PC-9 (cell line): ENCODE measurements at regions of chr1 and their contacts with region 1.

Region 1: GRCh38 chr1:51760872-51761271 is 117.7 kb downstream of the NRDC start:
- DNase-seq: peak in 1 of 2 experiments; percentile 76
- H3K4me3 ChIP-seq: no peak overlapping the region
- H3K27ac ChIP-seq: peak overlapping the region; percentile 60
- H3K4me1 ChIP-seq: peaks cover 30% of the 10 kb centered on the region
- H3K27me3 ChIP-seq: no peaks in the 10 kb centered on the region
- CTCF ChIP-seq: no peak

Region 2: DNA sequence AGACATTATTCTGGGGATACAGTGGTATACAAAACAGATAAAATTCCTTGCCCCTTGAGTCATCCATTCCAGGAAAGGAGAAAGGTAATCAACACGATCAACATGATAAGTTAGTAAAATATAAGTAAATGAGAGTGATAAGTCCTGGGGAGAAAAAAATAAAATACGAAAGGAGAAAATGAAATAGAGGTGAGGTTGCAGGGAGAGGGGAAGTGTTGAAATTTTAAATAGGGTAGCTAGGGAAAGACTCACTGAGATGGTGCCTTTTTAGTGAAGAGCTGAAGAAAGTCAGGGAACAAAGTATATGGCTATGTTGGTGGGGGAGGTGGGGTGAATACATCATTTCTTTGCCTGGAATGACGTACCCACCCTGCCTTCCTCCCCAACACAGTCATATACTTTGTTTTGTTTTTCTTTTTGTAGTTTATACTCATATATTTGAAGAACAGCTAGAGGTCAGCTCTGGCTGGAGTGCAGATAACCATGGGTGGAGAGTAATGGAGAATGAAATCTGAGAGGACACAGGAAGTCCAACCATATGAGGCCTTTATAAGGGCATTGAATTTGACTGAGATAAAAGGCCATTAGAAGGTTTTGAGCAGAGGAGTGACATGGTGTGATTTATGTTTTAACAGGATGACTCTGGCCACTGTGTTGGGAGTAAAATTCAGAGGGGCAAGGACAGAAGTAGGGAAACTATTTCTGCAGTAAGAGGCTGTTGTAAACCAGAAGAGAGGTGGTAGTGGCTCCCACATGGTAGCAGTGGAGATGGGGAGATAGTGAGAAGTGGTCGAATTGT is 89.1 kb before region 1 on chr1:
- CTCF ChIA-PET with region 1: interaction called, 9 read pairs
- POLR2A ChIA-PET with region 1: no interaction called
- intact Hi-C with region 1: loop called (anchors 5 kb)
- DNase-seq: peak in 1 of 2 experiments; percentile 34
- H3K4me3 ChIP-seq: no peak overlapping the region
- H3K27ac ChIP-seq: no peak overlapping the region
- H3K4me1 ChIP-seq: peaks cover 13% of the 10 kb centered on the region
- H3K27me3 ChIP-seq: no peaks in the 10 kb centered on the region
- CTCF ChIP-seq: no peak

Region 3: GRCh38 chr1:52702886-52703787 is 942.3 kb after region 1 on chr1:
- CTCF ChIA-PET with region 1: no interaction called
- POLR2A ChIA-PET with region 1: no interaction called
- intact Hi-C with region 1: no loop called
- DNase-seq: peak; percentile 46 to 72
- H3K4me3 ChIP-seq: peak overlapping the region; percentile 46; the same call in 1 of the 2 replicates
- H3K27ac ChIP-seq: no peak overlapping the region
- H3K4me1 ChIP-seq: peaks cover 30% of the 10 kb centered on the region
- H3K27me3 ChIP-seq: no peaks in the 10 kb centered on the region
- CTCF ChIP-seq: no peak